Calu3 (cell line): ENCODE measurements at regions of chr10 and their contacts with region 1.

Region 1: GRCh38 chr10:58952747-58953466 is 223.5 kb upstream of the PHYHIPL start:
- DNase-seq: peak; percentile 65
- H3K4me3 Mint-ChIP-seq: no peak overlapping the region
- H3K27ac Mint-ChIP-seq: no peak overlapping the region
- H3K4me1 Mint-ChIP-seq: peaks cover 7% of the 10 kb centered on the region
- H3K27me3 Mint-ChIP-seq: peaks cover 20% of the 10 kb centered on the region
- CTCF ChIP-seq: peak; percentile 75

Region 2: DNA sequence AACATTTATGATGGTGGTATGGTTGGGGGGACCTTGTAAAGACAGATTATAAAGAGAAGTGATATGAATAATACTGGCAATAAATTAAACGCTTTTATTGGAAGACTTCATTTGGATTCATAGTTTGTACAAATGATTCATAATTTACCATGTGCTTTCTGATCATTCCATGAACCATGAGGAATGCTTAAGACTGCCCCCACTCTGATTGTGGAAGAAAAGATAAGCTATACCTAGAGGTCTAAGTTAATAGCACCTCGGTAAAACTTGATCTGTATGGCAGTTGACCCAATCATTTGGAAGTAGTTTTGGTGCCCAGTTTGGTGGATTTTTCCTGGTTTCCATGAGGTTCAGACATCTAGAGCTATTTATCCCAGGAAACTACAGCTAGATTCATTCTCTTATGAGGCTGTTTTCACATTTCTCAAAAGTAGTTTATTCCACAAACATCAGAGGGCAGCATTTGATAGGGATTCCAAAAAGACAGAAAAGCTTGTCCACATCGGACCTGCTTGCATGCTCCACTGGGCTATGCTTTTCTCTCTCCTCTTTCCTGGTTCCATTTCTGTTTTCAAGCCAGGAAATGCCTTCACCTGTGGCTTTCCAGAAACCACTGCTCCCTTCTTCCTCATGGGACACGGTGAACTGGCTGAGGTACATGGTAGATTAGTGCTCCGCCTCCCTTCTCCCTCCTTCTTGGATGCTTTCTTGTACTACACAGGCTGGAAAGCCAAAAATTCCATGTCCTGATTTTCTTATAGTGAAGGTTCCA is 538.5 kb before region 1 on chr10:
- CTCF ChIA-PET with region 1: interaction called, 3 read pairs
- intact Hi-C with region 1: loop called (anchors 5 kb)
- DNase-seq: peak; percentile 63
- H3K4me3 Mint-ChIP-seq: no peak overlapping the region
- H3K27ac Mint-ChIP-seq: no peak overlapping the region
- H3K4me1 Mint-ChIP-seq: peaks cover 32% of the 10 kb centered on the region
- H3K27me3 Mint-ChIP-seq: no peaks in the 10 kb centered on the region
- CTCF ChIP-seq: peak; percentile 71

Region 3: DNA sequence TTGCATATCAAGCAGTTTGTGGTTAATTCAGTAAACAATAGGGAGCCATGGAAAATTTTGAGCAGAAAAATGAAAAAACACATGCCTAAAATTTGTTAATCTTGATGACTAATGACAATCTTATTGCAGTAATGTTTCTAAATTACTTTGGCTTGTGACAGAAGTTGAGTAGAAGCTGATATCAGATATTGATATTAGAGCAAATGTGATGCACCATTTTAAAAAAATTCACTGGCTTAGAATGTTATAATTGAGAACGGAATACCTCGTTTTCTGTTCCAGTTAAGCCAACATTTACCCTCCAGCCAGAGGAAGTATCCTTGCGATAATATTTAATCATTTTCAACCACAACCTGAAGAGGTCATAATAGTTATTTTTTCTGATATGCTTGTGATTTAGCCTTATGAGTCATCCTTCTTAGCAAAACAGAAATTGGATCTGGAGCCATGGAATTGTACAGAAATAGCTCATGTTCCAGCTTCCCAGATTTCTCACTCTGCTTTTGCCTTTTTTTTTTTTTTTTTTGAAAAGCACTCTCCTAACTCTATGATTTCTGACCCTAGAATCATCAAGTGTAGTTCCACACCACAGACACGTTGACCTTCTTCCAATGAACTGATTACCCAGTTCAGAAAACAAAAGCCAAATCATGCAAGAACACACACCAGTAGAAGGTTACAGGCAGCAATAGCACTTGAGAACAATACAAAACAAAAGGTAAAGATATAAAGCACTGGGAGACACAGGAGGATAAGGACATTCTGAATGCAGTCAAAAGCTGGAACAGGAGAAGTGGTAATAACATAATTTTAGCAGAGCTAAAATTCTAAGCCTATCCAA is 126.7 kb after region 1 on chr10:
- CTCF ChIA-PET with region 1: interaction called, 4 read pairs
- intact Hi-C with region 1: loop called (anchors 5 kb)
- DNase-seq: no peak
- H3K4me3 Mint-ChIP-seq: no peak overlapping the region
- H3K27ac Mint-ChIP-seq: no peak overlapping the region
- H3K4me1 Mint-ChIP-seq: peaks cover 26% of the 10 kb centered on the region
- H3K27me3 Mint-ChIP-seq: peaks cover 43% of the 10 kb centered on the region
- CTCF ChIP-seq: no peak

Region 4: GRCh38 chr10:59181668-59182067 is 228.8 kb after region 1 on chr10:
- CTCF ChIA-PET with region 1: interaction called, 4 read pairs
- intact Hi-C with region 1: loop called (anchors 1 kb)
- DNase-seq: peak; percentile 41
- H3K4me3 Mint-ChIP-seq: no peak overlapping the region
- H3K27ac Mint-ChIP-seq: no peak overlapping the region
- H3K4me1 Mint-ChIP-seq: peaks cover 10% of the 10 kb centered on the region
- H3K27me3 Mint-ChIP-seq: peaks cover 26% of the 10 kb centered on the region
- CTCF ChIP-seq: peak; percentile 49

Region 5: GRCh38 chr10:59580026-59580863 is 627.3 kb after region 1 on chr10:
- CTCF ChIA-PET with region 1: interaction called, 3 read pairs
- intact Hi-C with region 1: loop called (anchors 10 kb)
- DNase-seq: peak; percentile 8
- H3K4me3 Mint-ChIP-seq: no peak overlapping the region
- H3K27ac Mint-ChIP-seq: no peak overlapping the region
- H3K4me1 Mint-ChIP-seq: no peaks in the 10 kb centered on the region
- H3K27me3 Mint-ChIP-seq: peaks cover 53% of the 10 kb centered on the region
- CTCF ChIP-seq: peak; percentile 39